Activated T-helper 1 cell treated with anti-CD3 and anti-CD28 coated beads, Interleukin-12 subunit alpha, Interleukin-12 subunit beta, Interleukin-2, Interleukin-4 antibody, amounts not matched to agents 30 ng/mL and 10 ng/mL and 1 ng/mL, durations not matched to agents 14 hours and 24 hours and 36 hours (primary cell): ENCODE measurements at regions of chr2 and their contacts with region 1.

Region 1: DNA sequence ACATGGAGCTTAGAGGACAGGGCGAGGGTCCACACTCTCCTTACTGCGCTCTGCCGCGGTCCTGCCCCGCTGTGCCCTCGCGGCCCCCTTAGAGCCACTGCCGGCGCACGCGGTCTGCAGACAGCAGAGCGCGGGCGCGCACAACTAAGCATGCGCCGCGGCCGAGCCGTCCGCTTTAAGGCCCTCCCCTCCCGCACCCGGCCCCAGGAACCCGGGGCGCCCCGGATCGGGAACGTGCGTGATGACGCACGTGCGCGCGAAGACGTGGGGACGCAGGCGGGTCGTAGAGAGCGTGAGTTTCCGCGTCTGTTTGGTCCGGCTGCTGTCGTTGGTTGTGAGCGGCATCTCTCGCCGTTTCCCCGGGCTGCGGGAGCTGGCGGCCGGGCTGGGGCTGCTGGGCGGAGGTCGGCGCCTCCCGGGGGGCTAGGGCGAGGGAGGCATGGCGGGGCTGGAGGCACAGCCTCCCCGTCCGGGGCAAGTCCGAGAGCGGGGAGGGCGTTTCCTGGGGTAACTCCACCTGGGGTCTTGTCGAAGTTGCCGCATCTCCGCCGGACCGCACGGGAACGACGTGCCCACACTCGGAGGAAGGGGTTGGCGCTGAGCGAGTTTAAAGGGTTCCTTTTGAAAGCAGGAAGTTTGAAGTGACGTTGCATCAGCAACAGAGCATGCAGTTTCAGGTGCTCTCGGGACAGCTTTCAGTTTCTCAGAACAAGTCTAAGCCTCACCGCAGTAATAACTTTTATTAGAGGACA is at the start of gene RHBDD1:
- DNase-seq: peak; percentile 93
- H3K4me3 Mint-ChIP-seq: peak within 1 kb of the TSS; percentile 92
- H3K27ac Mint-ChIP-seq: peak within 1 kb of the TSS; percentile 99
- H3K4me1 Mint-ChIP-seq: peaks cover 62% of the 10 kb centered on the region
- H3K27me3 Mint-ChIP-seq: no peaks in the 10 kb centered on the region
- total RNA-seq, gene RHBDD1: 39.9 and 48.0 TPM in 2 replicates

Region 2: GRCh38 chr2:224946895-224947294 is 1889.1 kb before region 1 on chr2:
- intact Hi-C with region 1: loop called (anchors 5 kb)
- DNase-seq: no peak
- H3K4me3 Mint-ChIP-seq: peak overlapping the region; percentile 90
- H3K27ac Mint-ChIP-seq: peak overlapping the region; percentile 96
- H3K4me1 Mint-ChIP-seq: peaks cover 91% of the 10 kb centered on the region
- H3K27me3 Mint-ChIP-seq: no peaks in the 10 kb centered on the region

Region 3: GRCh38 chr2:226791487-226792081 is 44.4 kb before region 1 on chr2:
- intact Hi-C with region 1: loop called (anchors 1 kb)
- DNase-seq: peak; percentile 89
- H3K4me3 Mint-ChIP-seq: peak overlapping the region; percentile 89
- H3K27ac Mint-ChIP-seq: peak overlapping the region; percentile 97
- H3K4me1 Mint-ChIP-seq: peaks cover 61% of the 10 kb centered on the region
- H3K27me3 Mint-ChIP-seq: no peaks in the 10 kb centered on the region

Region 4: GRCh38 chr2:226904592-226904991 is 68.6 kb after region 1 on chr2:
- intact Hi-C with region 1: loop called (anchors 5 kb)
- DNase-seq: no peak
- H3K4me3 Mint-ChIP-seq: no peak overlapping the region
- H3K27ac Mint-ChIP-seq: no peak overlapping the region
- H3K4me1 Mint-ChIP-seq: peaks cover 18% of the 10 kb centered on the region
- H3K27me3 Mint-ChIP-seq: no peaks in the 10 kb centered on the region

Region 5: DNA sequence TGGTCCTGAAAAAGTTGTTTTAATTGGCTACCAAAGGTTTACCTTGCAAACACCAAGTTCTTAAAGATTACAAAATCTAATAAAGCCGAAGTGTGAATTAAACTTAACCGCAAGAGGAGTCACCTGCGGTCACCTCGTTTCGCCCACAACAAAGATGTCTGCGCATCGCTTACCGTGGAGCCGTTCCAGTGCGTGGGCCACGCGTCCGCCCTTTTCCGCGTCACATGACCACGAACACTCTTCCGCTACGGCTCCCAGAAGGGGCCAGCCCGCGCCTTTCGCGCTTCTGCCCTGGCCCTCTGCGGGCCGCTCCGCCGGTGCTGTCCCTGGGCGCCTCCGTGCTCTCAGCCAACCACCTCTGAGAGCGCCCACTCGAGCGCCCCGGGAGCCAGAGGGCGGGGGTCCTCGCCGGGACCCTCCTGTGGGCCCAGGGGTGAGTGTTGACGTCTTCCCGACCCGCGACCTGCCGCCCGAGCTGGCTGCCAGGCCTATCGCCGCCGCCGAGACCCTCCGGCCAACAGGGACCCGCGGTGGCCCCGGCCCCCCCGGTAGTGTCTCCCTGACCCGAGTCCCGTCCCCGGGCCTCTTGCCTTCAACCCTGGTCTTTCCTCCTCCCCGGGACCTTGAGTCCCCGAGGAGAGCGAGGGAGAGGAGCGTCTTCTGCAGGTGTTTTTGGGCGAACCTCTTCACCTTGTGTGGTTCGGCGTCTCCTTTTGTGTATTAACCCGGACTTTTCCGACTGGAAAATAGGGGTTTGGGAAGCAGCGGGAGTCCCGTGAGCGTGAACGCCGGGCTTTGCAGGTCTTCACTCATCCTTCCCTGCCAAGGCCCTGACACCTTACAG is 489.2 kb after region 1 on chr2 and contains the start of gene MFF:
- intact Hi-C with region 1: loop called (anchors 1 kb)
- DNase-seq: peak; percentile 91
- H3K4me3 Mint-ChIP-seq: peak within 1 kb of the TSS; percentile 94
- H3K27ac Mint-ChIP-seq: peak within 1 kb of the TSS; percentile 94
- H3K4me1 Mint-ChIP-seq: peaks cover 42% of the 10 kb centered on the region
- H3K27me3 Mint-ChIP-seq: peaks cover 14% of the 10 kb centered on the region
- total RNA-seq, gene MFF: 69.9 and 74.9 TPM in 2 replicates